ENCODE measurements at regions of chr11 and their contacts with region 1.

Region 1: GRCh38 chr11:72793425-72794367 is at the start of gene STARD10:
- DNase-seq: peak; percentile 87 to 99 (median 96)
- ATAC-seq: peak; percentile 91
- H3K4me3 Mint-ChIP-seq: peak within 1 kb of the TSS; percentile 92 to 100 (median 98)
- H3K27ac Mint-ChIP-seq: peak within 1 kb of the TSS; percentile 99 to 100 (median 100)
- H3K4me1 Mint-ChIP-seq: peaks cover 9 to 36% (median 29%) of the 10 kb centered on the region in 4 donors
- H3K27me3 Mint-ChIP-seq: no peaks in the 10 kb centered on the region
- polyA plus RNA-seq, gene STARD10: 13.5 to 16.3 (median 14.9) TPM

Region 2: DNA sequence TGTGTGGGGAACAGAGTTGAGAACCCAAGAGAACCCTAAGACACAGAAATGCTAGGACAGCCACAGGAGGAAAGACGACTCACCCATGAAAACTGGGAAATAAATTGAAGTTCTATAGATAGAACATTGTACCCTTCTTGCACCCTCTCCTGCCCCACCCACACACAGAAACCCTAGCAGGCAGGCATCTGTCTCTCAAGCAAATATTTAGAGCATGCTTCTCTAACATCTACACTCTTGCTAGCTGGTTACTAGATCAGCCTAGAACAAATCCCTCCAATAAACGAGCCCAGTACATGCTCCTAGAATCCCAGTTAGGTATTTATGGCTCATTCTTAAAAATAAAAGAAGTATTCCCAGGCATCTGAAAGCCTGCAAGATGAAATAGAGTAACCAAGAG is 327.3 kb before region 1 on chr11:
- POLR2A ChIA-PET with region 1: no interaction called
- DNase-seq: no peak
- ATAC-seq: no peak
- H3K4me3 Mint-ChIP-seq: no peak overlapping the region
- H3K27ac Mint-ChIP-seq: no peak overlapping the region
- H3K4me1 Mint-ChIP-seq: peaks cover 0 to 2% (median 2%) of the 10 kb centered on the region in 4 donors
- H3K27me3 Mint-ChIP-seq: peaks cover 20 to 59% (median 34%) of the 10 kb centered on the region in 5 donors

Region 3: GRCh38 chr11:72814286-72815109 is 20.8 kb after region 1 on chr11 and contains the start of gene ATG16L2:
- POLR2A ChIA-PET with region 1: interaction called, 41 read pairs
- DNase-seq: peak; percentile 78 to 93 (median 89)
- ATAC-seq: peak; percentile 83 to 85
- H3K4me3 Mint-ChIP-seq: peak within 1 kb of the TSS; percentile 95 to 99 (median 98)
- H3K27ac Mint-ChIP-seq: peak within 1 kb of the TSS; percentile 93 to 99 (median 98)
- H3K4me1 Mint-ChIP-seq: peaks cover 33 to 64% (median 54%) of the 10 kb centered on the region in 4 donors
- H3K27me3 Mint-ChIP-seq: no peaks in the 10 kb centered on the region
- polyA plus RNA-seq, gene ATG16L2: 9.9 to 12.1 (median 11.6) TPM